Activated CD4-positive, alpha-beta T cell treated with anti-CD3 and anti-CD28 coated beads for 36 hours (primary cell): ENCODE measurements at regions of chr10 and their contacts with region 1.

Region 1: DNA sequence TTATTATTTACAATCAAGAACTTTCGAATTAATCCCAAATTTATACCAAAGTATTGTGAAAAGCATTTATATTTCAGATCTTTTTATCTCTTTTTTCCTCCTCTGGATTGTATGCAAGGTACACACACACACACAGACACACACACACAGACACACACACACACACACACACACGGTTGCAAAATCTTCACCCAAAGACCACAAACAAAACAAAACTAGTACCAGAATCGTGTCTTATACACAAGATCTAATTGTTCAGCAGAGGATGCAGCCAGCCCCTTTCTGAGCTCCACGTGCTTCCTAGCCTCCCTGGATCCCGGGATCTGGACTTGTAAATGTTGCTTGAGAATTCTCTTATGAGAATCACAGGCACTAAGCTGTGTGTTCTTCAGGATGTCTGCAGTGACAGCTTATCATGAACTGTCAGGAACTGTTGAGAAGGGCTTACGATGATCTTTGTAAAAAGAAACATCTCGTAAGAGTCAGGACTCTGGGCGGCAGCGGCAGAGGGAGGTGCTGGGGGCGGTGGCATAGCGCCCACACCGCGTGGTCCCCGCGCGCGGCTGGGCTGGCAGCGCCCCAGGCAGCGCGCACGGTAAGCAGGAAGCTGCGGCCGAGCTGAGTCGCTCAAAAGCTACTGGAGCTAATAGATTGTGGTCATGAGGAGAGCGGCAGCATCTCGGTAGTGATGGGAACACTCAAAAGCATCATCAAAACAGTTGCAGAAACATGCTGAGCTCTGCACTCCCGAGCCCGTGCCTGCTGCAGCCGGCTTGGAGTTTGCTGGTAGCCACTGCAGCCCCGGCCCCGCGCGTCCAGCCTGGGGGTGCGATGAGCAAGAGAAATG is 277.6 kb downstream of the GATA3 start:
- DNase-seq: peak; percentile 89
- ATAC-seq: peak; percentile 94
- H3K4me3 Mint-ChIP-seq: peak overlapping the region; percentile 79
- H3K27ac Mint-ChIP-seq: peak overlapping the region; percentile 78
- H3K4me1 Mint-ChIP-seq: peaks cover 60% of the 10 kb centered on the region
- H3K27me3 Mint-ChIP-seq: peaks cover 2% of the 10 kb centered on the region

Region 2: DNA sequence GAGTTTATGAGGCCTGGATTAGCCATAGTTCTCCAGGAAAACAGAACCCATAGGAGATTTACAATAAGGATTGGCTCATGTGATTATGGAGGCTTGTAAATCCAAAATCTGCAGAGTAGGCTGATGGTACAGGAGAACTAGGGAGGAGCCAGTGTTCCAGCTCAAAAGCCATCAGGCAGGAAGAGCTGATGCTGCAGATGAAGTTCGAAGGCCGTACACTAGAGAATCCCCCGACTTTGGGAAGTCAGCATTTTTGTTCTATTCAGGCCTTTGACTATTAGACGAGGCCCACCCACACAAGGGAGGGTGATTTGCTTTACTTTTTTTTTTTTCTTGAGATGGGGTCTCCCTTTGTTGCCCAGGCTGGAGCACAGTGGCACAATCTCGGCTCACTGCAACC is 581.9 kb before region 1 on chr10:
- CTCF ChIA-PET with region 1: no interaction called
- POLR2A ChIA-PET with region 1: no interaction called
- intact Hi-C with region 1: no loop called
- DNase-seq: no peak
- ATAC-seq: no peak
- H3K4me3 Mint-ChIP-seq: no peak overlapping the region
- H3K27ac Mint-ChIP-seq: no peak overlapping the region
- H3K4me1 Mint-ChIP-seq: no peaks in the 10 kb centered on the region
- H3K27me3 Mint-ChIP-seq: no peaks in the 10 kb centered on the region

Region 3: DNA sequence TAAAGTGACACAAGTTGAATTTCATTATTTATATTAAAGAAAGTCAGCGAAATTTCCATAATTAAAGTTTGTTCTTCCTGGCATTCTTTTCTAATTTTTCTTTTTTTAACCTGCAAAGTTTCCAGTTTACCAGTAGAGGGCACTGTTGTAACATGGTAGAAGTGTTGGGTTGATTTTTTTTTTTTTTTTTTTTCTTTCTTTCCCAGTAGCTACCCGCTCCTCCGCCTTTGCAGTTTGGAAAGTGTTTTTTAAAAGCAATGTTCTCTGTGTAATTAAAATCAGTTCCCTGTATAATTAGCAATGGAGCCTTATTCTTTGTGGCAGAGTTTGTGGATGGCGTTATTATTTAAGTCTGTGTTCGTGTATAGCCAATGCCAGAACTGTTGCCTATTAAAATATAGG is 460.1 kb before region 1 on chr10:
- CTCF ChIA-PET with region 1: no interaction called
- POLR2A ChIA-PET with region 1: no interaction called
- intact Hi-C with region 1: loop called in 1 of 2 experiments (anchors 10 kb)
- DNase-seq: no peak
- ATAC-seq: no peak
- H3K4me3 Mint-ChIP-seq: peak overlapping the region; percentile 56
- H3K27ac Mint-ChIP-seq: no peak overlapping the region
- H3K4me1 Mint-ChIP-seq: peaks cover 9% of the 10 kb centered on the region
- H3K27me3 Mint-ChIP-seq: no peaks in the 10 kb centered on the region

Region 4: DNA sequence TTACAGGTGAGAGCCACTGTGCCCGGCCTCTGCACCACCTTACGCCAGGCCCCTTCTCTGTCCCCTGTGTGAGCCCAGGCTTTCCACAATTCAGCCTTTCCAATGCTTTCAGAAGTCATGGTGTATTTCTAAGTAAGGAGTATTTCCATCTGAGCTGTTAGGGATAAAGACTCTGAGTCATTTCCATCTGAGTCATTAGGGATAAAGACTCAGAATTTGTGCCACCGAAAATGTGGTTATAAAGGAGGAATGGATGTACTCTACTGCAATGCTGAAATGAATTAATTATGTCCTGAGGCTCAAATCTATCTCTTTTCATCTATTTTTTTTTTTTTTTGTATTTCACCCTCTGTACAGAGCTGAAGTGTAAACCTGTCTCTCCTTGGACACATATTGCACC is 193.6 kb before region 1 on chr10:
- CTCF ChIA-PET with region 1: no interaction called
- POLR2A ChIA-PET with region 1: interaction called, 4 read pairs
- intact Hi-C with region 1: loop called in 1 of 2 experiments (anchors 2 kb)
- DNase-seq: no peak
- ATAC-seq: no peak
- H3K4me3 Mint-ChIP-seq: no peak overlapping the region
- H3K27ac Mint-ChIP-seq: peak overlapping the region; percentile 60
- H3K4me1 Mint-ChIP-seq: peaks cover 36% of the 10 kb centered on the region
- H3K27me3 Mint-ChIP-seq: peaks cover 2% of the 10 kb centered on the region

Region 5: DNA sequence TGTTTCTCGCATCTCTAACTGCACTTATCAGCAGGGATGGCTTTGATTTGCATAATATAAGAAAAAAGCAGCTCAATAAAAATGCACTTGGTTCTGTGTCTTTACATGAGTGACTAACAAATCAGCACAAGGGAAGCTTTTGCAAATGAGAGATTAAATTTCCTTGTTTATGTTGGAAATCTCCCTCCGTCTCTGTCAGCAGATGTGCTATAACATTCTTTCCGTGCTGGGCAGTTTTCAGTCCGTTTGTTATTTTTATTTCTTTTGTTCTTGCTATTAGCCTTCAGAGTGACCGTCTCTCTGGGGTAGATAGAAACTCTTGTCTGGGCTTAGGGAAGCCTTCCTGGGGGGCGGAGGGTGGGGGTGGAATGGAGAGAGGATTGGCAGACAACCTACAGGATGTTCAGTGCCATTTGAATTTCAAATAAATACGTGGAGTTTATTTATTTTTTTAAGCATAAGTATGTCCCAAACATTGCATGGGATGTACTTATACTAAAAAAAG is 181.7 kb before region 1 on chr10:
- CTCF ChIA-PET with region 1: no interaction called
- POLR2A ChIA-PET with region 1: no interaction called
- intact Hi-C with region 1: no loop called
- DNase-seq: no peak
- ATAC-seq: no peak
- H3K4me3 Mint-ChIP-seq: no peak overlapping the region
- H3K27ac Mint-ChIP-seq: no peak overlapping the region
- H3K4me1 Mint-ChIP-seq: peaks cover 5% of the 10 kb centered on the region
- H3K27me3 Mint-ChIP-seq: peaks cover 2% of the 10 kb centered on the region

Region 6: DNA sequence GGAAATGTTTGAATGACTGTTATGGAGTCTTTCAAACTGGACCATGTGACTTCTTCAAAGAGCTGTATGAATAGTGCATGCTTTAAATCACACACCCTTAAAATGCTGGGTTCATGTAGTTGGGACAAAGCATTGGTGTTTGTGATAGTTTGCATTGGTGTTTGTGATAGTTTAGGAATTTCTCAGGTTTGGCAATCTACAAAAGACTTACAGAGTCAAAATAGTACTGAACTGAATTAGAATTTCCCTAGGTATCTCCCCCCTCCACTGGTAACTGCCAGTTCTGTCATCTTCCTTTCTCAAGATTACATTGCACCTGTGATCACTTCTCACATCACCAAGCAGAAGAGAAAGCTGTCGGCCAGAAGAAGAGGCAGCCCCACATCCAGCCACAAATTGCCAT is 16.5 kb before region 1 on chr10:
- CTCF ChIA-PET with region 1: interaction called, 8 read pairs
- POLR2A ChIA-PET with region 1: interaction called, 6 read pairs
- intact Hi-C with region 1: loop called in 1 of 2 experiments (anchors 2 kb)
- DNase-seq: peak; percentile 44
- ATAC-seq: peak; percentile 84
- H3K4me3 Mint-ChIP-seq: no peak overlapping the region
- H3K27ac Mint-ChIP-seq: peak overlapping the region; percentile 78
- H3K4me1 Mint-ChIP-seq: peaks cover 56% of the 10 kb centered on the region
- H3K27me3 Mint-ChIP-seq: peaks cover 2% of the 10 kb centered on the region

Region 7: DNA sequence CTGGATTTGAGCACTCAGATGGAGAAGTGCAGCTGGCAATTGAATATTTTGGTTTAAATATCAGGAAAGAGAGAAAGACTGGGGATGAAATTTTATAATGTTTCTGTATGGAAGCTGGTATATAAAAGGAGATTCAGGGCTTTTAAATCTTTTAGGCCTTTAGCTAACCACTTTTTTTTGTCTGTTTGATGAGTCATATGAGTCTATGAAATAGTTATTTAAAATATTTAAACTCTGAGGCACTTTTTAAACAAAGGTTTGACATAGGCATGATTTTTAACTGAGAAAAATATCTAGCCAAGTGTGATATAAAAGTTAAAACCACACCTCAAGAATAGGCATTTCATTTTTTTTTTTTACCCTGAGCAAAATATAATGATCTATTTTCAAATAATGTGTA is 666.6 kb after region 1 on chr10:
- CTCF ChIA-PET with region 1: no interaction called
- POLR2A ChIA-PET with region 1: no interaction called
- intact Hi-C with region 1: loop called (anchors 10 kb)
- DNase-seq: no peak
- ATAC-seq: no peak
- H3K4me3 Mint-ChIP-seq: no peak overlapping the region
- H3K27ac Mint-ChIP-seq: no peak overlapping the region
- H3K4me1 Mint-ChIP-seq: peaks cover 31% of the 10 kb centered on the region
- H3K27me3 Mint-ChIP-seq: no peaks in the 10 kb centered on the region

Region 8: GRCh38 chr10:9024210-9024609 is 692.1 kb after region 1 on chr10:
- CTCF ChIA-PET with region 1: no interaction called
- POLR2A ChIA-PET with region 1: no interaction called
- intact Hi-C with region 1: loop called (anchors 10 kb)
- DNase-seq: no peak
- ATAC-seq: peak; percentile 72
- H3K4me3 Mint-ChIP-seq: no peak overlapping the region
- H3K27ac Mint-ChIP-seq: peak overlapping the region; percentile 81
- H3K4me1 Mint-ChIP-seq: peaks cover 47% of the 10 kb centered on the region
- H3K27me3 Mint-ChIP-seq: peaks cover 12% of the 10 kb centered on the region

Region 9: GRCh38 chr10:9097206-9097985 is 765.3 kb after region 1 on chr10:
- CTCF ChIA-PET with region 1: interaction called, 3 read pairs
- POLR2A ChIA-PET with region 1: no interaction called
- intact Hi-C with region 1: loop called (anchors 5 to 10 kb)
- DNase-seq: no peak
- ATAC-seq: no peak
- H3K4me3 Mint-ChIP-seq: no peak overlapping the region
- H3K27ac Mint-ChIP-seq: no peak overlapping the region
- H3K4me1 Mint-ChIP-seq: peaks cover 46% of the 10 kb centered on the region
- H3K27me3 Mint-ChIP-seq: peaks cover 3% of the 10 kb centered on the region